Astrocyte of the cerebellum (primary cell): ENCODE measurements at regions of chr22 and their contacts with region 1.

Region 1: DNA sequence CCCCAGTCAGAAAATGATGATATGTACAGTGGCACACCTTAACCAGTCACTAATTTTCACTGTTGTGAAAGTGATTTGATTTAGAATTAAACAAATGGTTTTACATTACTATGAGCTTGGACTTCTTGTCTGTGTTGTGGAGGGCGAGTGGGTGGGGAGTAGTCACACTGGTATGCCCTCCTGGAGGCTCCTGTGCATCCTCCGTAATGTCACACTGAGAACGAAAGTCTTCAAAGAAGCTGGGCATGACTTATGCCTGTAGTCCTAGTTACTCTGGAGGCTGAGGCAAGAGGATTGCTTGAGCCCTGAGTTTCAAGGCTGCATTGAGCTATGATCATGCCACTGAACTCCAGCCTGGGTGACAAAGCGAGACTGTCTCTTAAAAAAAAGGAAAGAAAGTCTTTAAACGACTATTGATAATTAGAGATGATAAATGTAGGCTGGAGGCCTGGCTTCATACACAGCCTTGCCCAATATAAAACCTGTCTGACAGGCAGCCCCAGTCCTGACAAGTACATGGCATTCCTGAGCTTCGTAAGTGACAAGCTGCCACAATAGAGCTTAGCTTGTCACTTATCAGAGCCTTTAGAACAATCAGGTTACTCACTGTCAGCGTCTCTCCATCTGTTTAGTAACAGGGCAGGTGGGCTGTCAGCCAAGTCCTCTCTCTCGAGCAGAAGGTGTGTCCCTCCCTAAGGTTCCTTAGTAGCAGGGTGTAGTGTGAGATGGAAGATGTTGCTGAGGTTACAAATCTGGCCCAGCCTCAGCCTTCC is 5.0 kb upstream of the LIMK2 start:
- DNase-seq: no peak
- H3K4me3 ChIP-seq: no peak overlapping the region
- CTCF ChIP-seq: no peak

Region 2: GRCh38 chr22:31278622-31279326 is 71.7 kb after region 1 on chr22:
- in situ Hi-C with region 1: loop called (anchors 5 kb)
- DNase-seq: no peak
- H3K4me3 ChIP-seq: no peak overlapping the region
- CTCF ChIP-seq: no peak

Region 3: DNA sequence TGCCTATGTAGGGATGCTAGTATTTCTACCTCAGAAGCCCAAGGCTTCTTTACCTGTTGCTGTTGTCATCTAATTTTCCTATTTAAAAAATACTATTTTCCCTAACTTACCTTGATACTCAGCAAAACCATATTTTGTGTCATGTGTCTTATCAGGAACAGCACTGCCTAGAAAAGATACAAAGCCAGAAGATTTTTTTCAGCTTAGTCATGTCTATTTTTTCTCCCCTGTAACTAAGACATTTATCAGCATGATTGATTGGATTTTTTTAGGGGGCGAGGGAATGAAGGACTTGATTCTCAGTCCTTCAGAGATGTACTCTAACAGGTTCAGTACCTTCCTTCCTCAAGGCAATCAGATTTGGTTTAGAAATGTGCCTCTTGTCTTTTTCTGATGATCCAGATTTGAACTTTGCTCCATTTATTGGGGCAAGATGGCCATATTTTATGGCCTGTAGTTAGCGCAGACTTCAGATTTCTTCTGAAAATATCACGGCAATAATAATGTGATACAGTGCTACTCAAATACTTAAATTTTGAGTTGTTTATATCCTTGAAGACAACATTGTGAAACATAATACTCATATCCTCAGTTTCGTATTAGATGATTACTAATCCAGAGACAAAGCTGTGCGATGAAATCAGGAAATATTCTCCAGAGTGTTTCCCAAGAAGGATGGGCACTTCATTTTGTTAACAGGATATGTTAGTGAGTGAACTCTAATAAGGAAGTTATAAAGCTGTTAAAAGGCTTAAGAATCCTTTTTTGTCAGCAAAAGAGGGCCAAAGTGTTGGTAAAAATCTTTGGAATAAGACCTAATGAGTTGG is 89.0 kb after region 1 on chr22:
- in situ Hi-C with region 1: no loop called
- DNase-seq: no peak
- H3K4me3 ChIP-seq: no peak overlapping the region
- CTCF ChIP-seq: no peak

Region 4: DNA sequence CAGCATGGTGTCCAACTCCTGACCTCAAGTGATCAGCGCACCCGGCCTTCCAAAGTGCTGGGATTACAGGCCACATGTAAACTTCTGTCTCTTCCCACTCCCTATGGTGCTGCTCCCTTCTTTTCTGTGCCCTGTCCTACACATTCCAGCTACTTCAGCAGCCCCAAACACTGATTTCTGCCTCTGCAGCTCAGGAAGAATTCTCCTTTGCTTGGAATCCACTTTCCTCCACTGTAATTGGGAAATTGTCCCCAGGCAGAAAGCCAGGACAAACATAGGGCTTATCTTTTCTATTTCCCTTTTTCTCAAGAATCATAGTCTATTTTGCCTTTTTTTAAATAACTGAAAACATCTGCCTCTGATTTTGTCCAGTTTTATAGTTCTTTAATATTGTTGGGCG is 171.0 kb after region 1 on chr22:
- in situ Hi-C with region 1: no loop called
- DNase-seq: no peak
- H3K4me3 ChIP-seq: no peak overlapping the region
- CTCF ChIP-seq: no peak